CD4-positive, alpha-beta T cell (primary cell): ENCODE measurements at regions of chr19 and their contacts with region 1.

Region 1: DNA sequence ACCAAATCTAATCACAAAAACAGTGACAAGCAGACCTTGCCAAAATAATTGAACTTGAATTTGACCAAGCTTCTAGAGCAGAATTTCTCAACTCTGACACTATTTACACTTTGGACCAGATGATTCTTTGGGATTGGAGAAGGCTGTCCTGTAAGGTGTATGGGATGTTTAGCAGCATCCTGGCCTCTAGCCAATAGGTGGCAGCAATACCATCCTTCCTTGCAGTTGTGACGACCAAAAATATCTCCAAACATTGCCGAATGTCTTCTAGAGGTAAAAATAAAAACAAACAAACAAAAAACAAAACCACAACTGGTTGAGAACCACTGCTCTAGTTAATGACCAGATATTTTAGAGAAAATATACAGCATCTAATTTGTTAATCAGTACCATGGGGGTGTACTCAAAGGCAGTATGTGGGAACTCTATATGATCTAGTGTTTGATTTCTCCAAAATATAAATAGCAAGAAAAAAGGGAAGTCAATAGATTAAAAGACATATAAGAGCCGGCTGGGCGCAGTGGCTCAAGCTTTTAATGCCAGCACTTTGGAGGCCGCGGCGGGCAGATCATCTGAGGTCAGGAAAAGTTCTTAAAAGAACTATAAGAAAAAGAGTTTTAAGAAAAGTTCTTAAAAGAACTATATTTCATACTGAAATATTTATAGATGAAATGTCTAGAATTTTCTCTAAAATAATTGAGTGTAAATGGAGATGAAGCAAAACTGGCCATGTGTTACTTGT is 60.9 kb upstream of the ZNF527 start:
- DNase-seq: peak in 7 of 14 experiments; percentile 9 to 68 (median 44)
- ATAC-seq: no peak
- H3K4me3 ChIP-seq: no peak overlapping the region
- H3K4me3 Mint-ChIP-seq: peak overlapping the region; percentile 50
- H3K27ac ChIP-seq: no peak overlapping the region
- H3K27ac Mint-ChIP-seq: no peak overlapping the region
- H3K4me1 ChIP-seq: peaks cover 12% of the 10 kb centered on the region
- H3K4me1 Mint-ChIP-seq: peaks cover 22% of the 10 kb centered on the region
- H3K27me3 ChIP-seq: peaks cover 0 to 7% of the 10 kb centered on the region in 2 experiments
- H3K27me3 Mint-ChIP-seq: peaks cover 11% of the 10 kb centered on the region
- CTCF ChIP-seq: peak; percentile 71

Region 2: GRCh38 chr19:36547001-36547732 is 762.8 kb before region 1 on chr19:
- CTCF ChIA-PET with region 1: no interaction called
- POLR2A ChIA-PET with region 1: no interaction called
- intact Hi-C with region 1: no loop called
- DNase-seq: peak in 1 of 14 experiments; percentile 5
- ATAC-seq: no peak
- H3K4me3 ChIP-seq: no peak overlapping the region
- H3K4me3 Mint-ChIP-seq: no peak overlapping the region
- H3K27ac ChIP-seq: no peak overlapping the region
- H3K27ac Mint-ChIP-seq: no peak overlapping the region
- H3K4me1 ChIP-seq: no peaks in the 10 kb centered on the region
- H3K4me1 Mint-ChIP-seq: no peaks in the 10 kb centered on the region
- H3K27me3 ChIP-seq: no peaks in the 10 kb centered on the region
- H3K27me3 Mint-ChIP-seq: no peaks in the 10 kb centered on the region
- CTCF ChIP-seq: no peak

Region 3: DNA sequence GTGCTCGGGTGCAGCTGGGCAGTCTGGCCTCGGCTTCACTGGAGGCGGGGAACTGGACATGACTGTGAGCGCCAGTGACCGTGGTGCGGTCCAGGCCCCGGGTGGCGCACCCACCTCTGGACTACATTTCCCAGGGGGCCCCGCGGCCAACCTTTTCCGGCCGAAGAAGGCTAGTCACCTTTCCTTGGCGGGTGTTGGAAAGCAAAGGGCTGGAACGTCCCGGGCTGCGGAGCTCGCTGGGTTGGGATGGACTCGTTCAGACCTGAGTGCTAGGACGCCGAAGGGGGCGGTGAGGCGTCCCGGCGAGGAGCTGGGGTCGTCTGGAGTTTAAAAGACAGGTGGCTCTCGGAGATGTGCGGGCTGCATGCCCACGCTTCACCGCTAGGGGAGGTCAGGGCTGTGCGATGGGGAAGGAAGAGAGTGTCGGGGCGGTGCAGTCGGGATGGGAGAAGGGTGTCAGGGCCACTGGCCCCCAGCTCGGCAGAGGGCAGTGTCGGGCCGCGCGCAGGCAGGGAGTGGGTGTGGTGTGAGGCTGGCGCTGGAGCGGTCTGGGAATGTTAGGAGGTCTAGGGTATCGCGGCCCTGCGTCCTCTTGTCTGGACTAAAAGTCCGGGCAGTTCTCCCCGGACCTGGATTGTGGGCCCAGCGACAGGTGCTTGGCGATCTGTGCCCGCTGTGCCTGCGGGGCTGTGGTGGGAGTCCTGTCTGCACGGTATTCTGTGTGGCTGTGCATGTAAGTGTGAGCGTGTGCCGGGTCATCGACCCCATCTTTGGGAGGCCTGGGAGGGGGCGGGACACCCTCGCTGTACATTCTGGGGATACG is 336.8 kb before region 1 on chr19:
- CTCF ChIA-PET with region 1: no interaction called
- POLR2A ChIA-PET with region 1: interaction called, 4 read pairs
- intact Hi-C with region 1: loop called in 1 of 2 experiments (anchors 10 kb)
- DNase-seq: peak; percentile 48 to 91 (median 72)
- ATAC-seq: peak; percentile 98
- H3K4me3 ChIP-seq: peak overlapping the region; percentile 83
- H3K4me3 Mint-ChIP-seq: peak overlapping the region; percentile 92
- H3K27ac ChIP-seq: peak overlapping the region; percentile 57 to 78
- H3K27ac Mint-ChIP-seq: peak overlapping the region; percentile 94
- H3K4me1 ChIP-seq: peaks cover 17% of the 10 kb centered on the region
- H3K4me1 Mint-ChIP-seq: peaks cover 16% of the 10 kb centered on the region
- H3K27me3 ChIP-seq: no peaks in the 10 kb centered on the region
- H3K27me3 Mint-ChIP-seq: no peaks in the 10 kb centered on the region
- CTCF ChIP-seq: peak; percentile 97

Region 4: GRCh38 chr19:37172368-37173366 is 137.3 kb before region 1 on chr19 and contains the start of gene ZNF585A:
- CTCF ChIA-PET with region 1: no interaction called
- POLR2A ChIA-PET with region 1: no interaction called
- intact Hi-C with region 1: loop called in 1 of 2 experiments (anchors 10 kb)
- DNase-seq: peak; percentile 83 to 98 (median 89)
- ATAC-seq: peak; percentile 99
- H3K4me3 ChIP-seq: peak within 1 kb of the TSS; percentile 77
- H3K4me3 Mint-ChIP-seq: no peak within 1 kb of the TSS
- H3K27ac ChIP-seq: peak within 1 kb of the TSS; percentile 63 to 73
- H3K27ac Mint-ChIP-seq: no peak within 1 kb of the TSS
- H3K4me1 ChIP-seq: peaks cover 11% of the 10 kb centered on the region
- H3K4me1 Mint-ChIP-seq: no peaks in the 10 kb centered on the region
- H3K27me3 ChIP-seq: no peaks in the 10 kb centered on the region
- H3K27me3 Mint-ChIP-seq: no peaks in the 10 kb centered on the region
- CTCF ChIP-seq: no peak
- total RNA-seq, gene ZNF585A: 4.5 to 4.6 TPM

Region 5: GRCh38 chr19:37506387-37507166 is 196.6 kb after region 1 on chr19 and contains the start of gene ZNF793:
- CTCF ChIA-PET with region 1: no interaction called
- POLR2A ChIA-PET with region 1: interaction called, 3 read pairs
- intact Hi-C with region 1: loop called in 1 of 2 experiments (anchors 10 kb)
- DNase-seq: peak; percentile 68 to 92 (median 78)
- ATAC-seq: peak; percentile 85
- H3K4me3 ChIP-seq: peak within 1 kb of the TSS; percentile 68
- H3K4me3 Mint-ChIP-seq: no peak within 1 kb of the TSS
- H3K27ac ChIP-seq: peak within 1 kb of the TSS; percentile 88 to 92
- H3K27ac Mint-ChIP-seq: no peak within 1 kb of the TSS
- H3K4me1 ChIP-seq: peaks cover 20% of the 10 kb centered on the region
- H3K4me1 Mint-ChIP-seq: no peaks in the 10 kb centered on the region
- H3K27me3 ChIP-seq: no peaks in the 10 kb centered on the region
- H3K27me3 Mint-ChIP-seq: no peaks in the 10 kb centered on the region
- CTCF ChIP-seq: no peak
- total RNA-seq, gene ZNF793: 2.3 TPM

Region 6: DNA sequence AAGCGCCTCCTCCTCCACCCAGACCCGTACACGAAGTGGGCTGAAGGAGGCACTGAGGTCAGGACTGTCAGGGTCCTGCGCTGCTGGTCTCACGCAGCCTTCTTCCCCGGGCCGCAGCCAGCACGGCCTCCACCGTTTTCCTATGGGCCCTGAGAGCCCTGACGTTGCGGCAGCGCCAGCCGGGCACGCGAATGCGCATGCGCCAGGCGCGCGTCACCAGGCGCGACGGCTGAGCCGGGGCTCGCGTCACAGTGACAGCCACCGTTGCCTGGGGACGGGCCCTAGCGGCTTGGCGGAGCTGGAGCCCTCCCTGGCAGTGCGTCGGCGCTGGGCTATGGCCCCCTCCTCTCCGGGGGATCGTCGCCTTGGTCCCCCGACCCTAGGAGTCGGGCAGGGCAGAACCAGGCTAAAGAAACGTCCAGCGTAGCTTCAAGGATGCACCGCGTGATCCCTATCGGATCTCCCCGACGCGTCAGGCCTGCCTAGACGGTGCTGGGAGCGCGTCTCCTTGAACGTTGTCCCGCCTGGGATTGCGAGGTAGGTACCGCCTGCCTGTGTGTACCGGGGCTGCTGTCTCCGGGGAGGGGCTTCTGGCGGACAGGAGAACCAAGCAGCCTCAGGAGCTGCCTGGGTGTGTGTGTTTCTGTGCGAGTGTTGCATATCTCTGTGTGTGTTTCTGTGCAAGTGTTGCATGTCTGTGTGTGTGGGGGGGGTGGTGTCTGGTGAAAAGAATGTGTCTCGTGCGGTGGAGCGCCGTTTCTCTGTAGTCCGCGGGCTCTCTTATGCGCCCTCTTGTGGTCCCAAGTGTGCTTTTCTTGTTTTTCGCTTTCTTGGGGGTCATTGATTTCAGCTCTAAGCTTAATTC is 241.4 kb after region 1 on chr19:
- CTCF ChIA-PET with region 1: no interaction called
- POLR2A ChIA-PET with region 1: interaction called, 4 read pairs
- intact Hi-C with region 1: loop called in 1 of 2 experiments (anchors 10 kb)
- DNase-seq: peak in 13 of 14 experiments; percentile 2 to 75 (median 36)
- ATAC-seq: peak; percentile 90
- H3K4me3 ChIP-seq: peak overlapping the region; percentile 53
- H3K4me3 Mint-ChIP-seq: peak overlapping the region; percentile 93
- H3K27ac ChIP-seq: no peak overlapping the region
- H3K27ac Mint-ChIP-seq: peak overlapping the region; percentile 89
- H3K4me1 ChIP-seq: peaks cover 12% of the 10 kb centered on the region
- H3K4me1 Mint-ChIP-seq: peaks cover 5% of the 10 kb centered on the region
- H3K27me3 ChIP-seq: peaks cover 0 to 3% of the 10 kb centered on the region in 2 experiments
- H3K27me3 Mint-ChIP-seq: no peaks in the 10 kb centered on the region
- CTCF ChIP-seq: peak; percentile 45

Region 7: GRCh38 chr19:37594304-37594981 is 284.4 kb after region 1 on chr19 and contains the starts of genes ZNF540 and ZNF571:
- CTCF ChIA-PET with region 1: no interaction called
- POLR2A ChIA-PET with region 1: no interaction called
- intact Hi-C with region 1: loop called in 1 of 2 experiments (anchors 10 kb)
- DNase-seq: peak; percentile 86 to 96 (median 91)
- ATAC-seq: peak; percentile 95
- H3K4me3 ChIP-seq: peak within 1 kb of the TSS; percentile 93
- H3K4me3 Mint-ChIP-seq: peak within 1 kb of the TSS; percentile 97
- H3K27ac ChIP-seq: peak within 1 kb of the TSS; percentile 94 to 97
- H3K27ac Mint-ChIP-seq: peak within 1 kb of the TSS; percentile 98
- H3K4me1 ChIP-seq: peaks cover 15% of the 10 kb centered on the region
- H3K4me1 Mint-ChIP-seq: peaks cover 39% of the 10 kb centered on the region
- H3K27me3 ChIP-seq: no peaks in the 10 kb centered on the region
- H3K27me3 Mint-ChIP-seq: no peaks in the 10 kb centered on the region
- CTCF ChIP-seq: no peak
- total RNA-seq, gene ZNF540: 11.6 to 12.0 TPM
- total RNA-seq, gene ZNF571: 6.7 to 7.0 TPM

Region 8: GRCh38 chr19:37691881-37692504 is 382.0 kb after region 1 on chr19:
- CTCF ChIA-PET with region 1: no interaction called
- POLR2A ChIA-PET with region 1: no interaction called
- intact Hi-C with region 1: loop called in 1 of 2 experiments (anchors 10 kb)
- DNase-seq: peak; percentile 61 to 90 (median 76)
- ATAC-seq: peak; percentile 95
- H3K4me3 ChIP-seq: peak overlapping the region; percentile 67
- H3K4me3 Mint-ChIP-seq: peak overlapping the region; percentile 96
- H3K27ac ChIP-seq: peak overlapping the region in 1 of 2 donors; percentile 32
- H3K27ac Mint-ChIP-seq: peak overlapping the region; percentile 89
- H3K4me1 ChIP-seq: peaks cover 11% of the 10 kb centered on the region
- H3K4me1 Mint-ChIP-seq: peaks cover 12% of the 10 kb centered on the region
- H3K27me3 ChIP-seq: no peaks in the 10 kb centered on the region
- H3K27me3 Mint-ChIP-seq: no peaks in the 10 kb centered on the region
- CTCF ChIP-seq: no peak